ENCODE measurements at regions of chr10 and their contacts with region 1.

Region 1: GRCh38 chr10:43255634-43256431 is 11.0 kb downstream of the RASGEF1A start:
- DNase-seq: peak in 4 of 5 donors; percentile 15 to 69 (median 39)
- H3K4me3 ChIP-seq: no peak overlapping the region
- H3K4me3 Mint-ChIP-seq: peak overlapping the region in 5 of 7 donors; percentile 51 to 75 (median 65)
- H3K27ac ChIP-seq: no peak overlapping the region
- H3K27ac Mint-ChIP-seq: peak overlapping the region; percentile 30 to 96 (median 81)
- H3K4me1 ChIP-seq: peaks cover 22% of the 10 kb centered on the region
- H3K4me1 Mint-ChIP-seq: peaks cover 15 to 62% (median 26%) of the 10 kb centered on the region in 3 donors
- H3K27me3 ChIP-seq: no peaks in the 10 kb centered on the region
- H3K27me3 Mint-ChIP-seq: peaks cover 0 to 2% of the 10 kb centered on the region in 2 donors

Region 2: GRCh38 chr10:43221419-43222209 is 34.2 kb before region 1 on chr10:
- CTCF ChIA-PET with region 1: interaction called, 10 read pairs
- POLR2A ChIA-PET with region 1: no interaction called
- DNase-seq: peak in 2 of 5 donors; percentile 32 to 54
- H3K4me3 ChIP-seq: no peak overlapping the region
- H3K4me3 Mint-ChIP-seq: peak overlapping the region in 2 of 7 donors; percentile 36 to 37
- H3K27ac ChIP-seq: no peak overlapping the region
- H3K27ac Mint-ChIP-seq: peak overlapping the region in 5 of 8 donors; percentile 38 to 74 (median 55)
- H3K4me1 ChIP-seq: peaks cover 10% of the 10 kb centered on the region
- H3K4me1 Mint-ChIP-seq: peaks cover 25 to 52% (median 42%) of the 10 kb centered on the region in 3 donors
- H3K27me3 ChIP-seq: no peaks in the 10 kb centered on the region
- H3K27me3 Mint-ChIP-seq: peaks cover 0 to 3% of the 10 kb centered on the region in 2 donors

Region 3: DNA sequence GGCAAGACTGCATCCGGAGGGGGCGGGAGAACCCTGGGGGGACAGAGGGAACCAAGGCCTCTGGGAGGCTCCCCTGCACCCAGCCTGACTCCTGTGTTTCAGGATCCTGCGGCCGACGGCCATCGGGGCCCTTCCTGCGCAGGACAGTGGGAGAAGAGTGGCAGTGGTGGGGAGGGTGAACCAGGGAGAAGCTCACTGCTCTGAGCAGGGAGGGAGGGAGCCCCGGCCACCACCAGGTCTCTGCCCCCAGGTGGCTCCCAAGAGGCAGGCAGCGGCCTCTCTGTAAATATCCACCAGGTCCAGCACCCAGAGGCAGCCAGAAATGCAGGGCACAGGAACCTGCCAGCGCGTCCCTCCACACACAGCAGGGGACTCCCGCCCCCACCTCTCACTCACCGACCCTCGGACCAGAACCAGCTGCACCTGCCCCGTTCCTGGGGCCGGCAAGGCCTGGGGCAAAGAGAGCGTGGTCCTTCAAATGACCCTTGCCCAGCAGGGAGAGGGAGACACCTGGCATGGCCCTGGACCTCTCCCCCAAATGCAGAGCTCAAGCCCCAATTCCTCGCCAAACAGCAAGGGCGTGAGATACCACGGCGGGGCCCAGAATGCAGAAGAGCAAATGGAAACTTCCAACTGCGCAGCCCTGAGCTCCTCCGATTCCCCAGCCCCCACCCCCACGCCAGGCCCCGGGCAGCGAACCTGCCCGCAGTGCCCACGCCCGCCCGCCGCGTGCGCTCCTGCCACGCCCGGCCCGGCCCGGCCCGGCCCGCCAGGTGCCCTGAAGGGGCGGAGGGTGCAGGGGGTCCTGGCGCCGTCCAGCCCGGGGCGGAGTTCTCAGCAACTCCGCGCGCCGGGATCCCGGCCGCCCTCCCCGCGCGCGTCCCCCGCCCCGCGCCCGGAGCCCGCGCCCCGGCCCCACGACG is 10.2 kb after region 1 on chr10:
- CTCF ChIA-PET with region 1: interaction called, 19 read pairs
- POLR2A ChIA-PET with region 1: no interaction called
- DNase-seq: peak in 3 of 5 donors; percentile 35 to 76 (median 44)
- H3K4me3 ChIP-seq: peak overlapping the region; percentile 51
- H3K4me3 Mint-ChIP-seq: peak overlapping the region; percentile 85 to 91 (median 88)
- H3K27ac ChIP-seq: no peak overlapping the region
- H3K27ac Mint-ChIP-seq: peak overlapping the region in 4 of 8 donors; percentile 14 to 80 (median 76)
- H3K4me1 ChIP-seq: peaks cover 7% of the 10 kb centered on the region
- H3K4me1 Mint-ChIP-seq: peaks cover 4 to 29% (median 8%) of the 10 kb centered on the region in 3 donors
- H3K27me3 ChIP-seq: peaks cover 21% of the 10 kb centered on the region
- H3K27me3 Mint-ChIP-seq: peaks cover 27 to 41% of the 10 kb centered on the region in 2 donors

Region 4: GRCh38 chr10:43299579-43299978 is 43.7 kb after region 1 on chr10:
- CTCF ChIA-PET with region 1: no interaction called
- POLR2A ChIA-PET with region 1: no interaction called
- DNase-seq: peak in 4 of 5 donors; percentile 36 to 70 (median 48)
- H3K4me3 ChIP-seq: no peak overlapping the region
- H3K4me3 Mint-ChIP-seq: peak overlapping the region; percentile 1 to 84 (median 44)
- H3K27ac ChIP-seq: no peak overlapping the region
- H3K27ac Mint-ChIP-seq: peak overlapping the region; percentile 80 to 94 (median 88)
- H3K4me1 ChIP-seq: peaks cover 45% of the 10 kb centered on the region
- H3K4me1 Mint-ChIP-seq: peaks cover 65 to 79% (median 77%) of the 10 kb centered on the region in 3 donors
- H3K27me3 ChIP-seq: no peaks in the 10 kb centered on the region
- H3K27me3 Mint-ChIP-seq: no peaks in the 10 kb centered on the region

Measured in CD8-positive, alpha-beta memory T cell (primary cell).